ENCODE measurements at regions of chr14 and their contacts with region 1.

Region 1: DNA sequence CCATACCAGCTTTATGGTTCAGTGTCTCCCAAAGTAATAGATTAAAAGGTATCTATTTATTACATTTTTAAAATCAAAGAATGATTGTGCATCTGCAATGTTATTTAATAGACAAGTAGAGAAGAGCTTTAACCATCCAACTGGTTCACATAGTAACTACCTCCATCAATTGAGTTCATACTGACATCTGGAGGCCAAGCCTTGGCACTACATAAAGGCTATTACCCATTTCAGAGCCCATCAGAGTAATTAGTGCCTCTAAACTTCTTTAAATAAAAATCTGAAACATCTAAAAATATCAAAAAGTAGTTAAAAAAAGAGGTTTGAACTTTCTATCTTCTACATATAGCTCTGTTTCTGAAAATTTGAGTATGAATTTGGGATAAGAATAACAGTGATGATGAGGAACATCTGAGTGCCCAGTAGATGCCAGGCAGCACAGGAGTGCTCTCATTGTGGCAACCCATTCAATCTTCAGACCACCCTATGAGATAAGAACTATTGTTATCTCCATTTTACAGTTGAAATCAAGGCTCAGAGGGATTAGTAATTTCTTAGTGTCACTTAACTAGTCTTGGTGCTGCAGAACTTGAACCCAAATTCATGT is 132.9 kb upstream of the DAAM1 start:
- DNase-seq: peak; percentile 5
- H3K4me3 ChIP-seq: no peak overlapping the region
- CTCF ChIP-seq: peak; percentile 57

Region 2: GRCh38 chr14:59028476-59029202 is 26.9 kb before region 1 on chr14:
- CTCF ChIA-PET with region 1: interaction called, 17 read pairs
- POLR2A ChIA-PET with region 1: no interaction called
- DNase-seq: peak; percentile 87
- H3K4me3 ChIP-seq: no peak overlapping the region
- CTCF ChIP-seq: peak; percentile 91

Region 3: DNA sequence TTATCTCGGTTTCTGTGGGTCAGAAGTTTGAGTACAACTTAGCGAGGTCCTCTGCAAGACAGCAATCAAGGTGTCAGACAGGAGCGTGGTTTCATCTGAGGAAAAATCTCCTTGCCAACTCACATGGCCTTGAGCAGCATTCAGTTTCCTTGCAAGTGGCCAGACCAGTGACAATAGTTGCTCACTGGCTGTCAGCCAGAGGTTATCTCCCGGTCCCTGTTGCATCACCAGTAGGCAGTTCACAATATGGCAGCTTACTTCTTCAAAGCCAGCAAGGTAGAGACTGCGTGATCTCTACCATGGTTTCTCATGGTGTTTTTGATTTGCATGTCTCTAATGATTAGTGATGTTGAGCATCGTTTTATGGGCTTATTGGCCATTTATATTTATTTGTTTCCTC is 10.8 kb before region 1 on chr14:
- CTCF ChIA-PET with region 1: interaction called, 20 read pairs
- POLR2A ChIA-PET with region 1: no interaction called
- DNase-seq: no peak
- H3K4me3 ChIP-seq: no peak overlapping the region
- CTCF ChIP-seq: no peak

Region 4: GRCh38 chr14:59069163-59069854 is 13.8 kb after region 1 on chr14:
- CTCF ChIA-PET with region 1: interaction called, 26 read pairs
- POLR2A ChIA-PET with region 1: no interaction called
- DNase-seq: no peak
- H3K4me3 ChIP-seq: no peak overlapping the region
- CTCF ChIP-seq: no peak